Heart left ventricle (tissue), 16 donors: ENCODE measurements at regions of chr13 and their contacts with region 1.

Region 1: DNA sequence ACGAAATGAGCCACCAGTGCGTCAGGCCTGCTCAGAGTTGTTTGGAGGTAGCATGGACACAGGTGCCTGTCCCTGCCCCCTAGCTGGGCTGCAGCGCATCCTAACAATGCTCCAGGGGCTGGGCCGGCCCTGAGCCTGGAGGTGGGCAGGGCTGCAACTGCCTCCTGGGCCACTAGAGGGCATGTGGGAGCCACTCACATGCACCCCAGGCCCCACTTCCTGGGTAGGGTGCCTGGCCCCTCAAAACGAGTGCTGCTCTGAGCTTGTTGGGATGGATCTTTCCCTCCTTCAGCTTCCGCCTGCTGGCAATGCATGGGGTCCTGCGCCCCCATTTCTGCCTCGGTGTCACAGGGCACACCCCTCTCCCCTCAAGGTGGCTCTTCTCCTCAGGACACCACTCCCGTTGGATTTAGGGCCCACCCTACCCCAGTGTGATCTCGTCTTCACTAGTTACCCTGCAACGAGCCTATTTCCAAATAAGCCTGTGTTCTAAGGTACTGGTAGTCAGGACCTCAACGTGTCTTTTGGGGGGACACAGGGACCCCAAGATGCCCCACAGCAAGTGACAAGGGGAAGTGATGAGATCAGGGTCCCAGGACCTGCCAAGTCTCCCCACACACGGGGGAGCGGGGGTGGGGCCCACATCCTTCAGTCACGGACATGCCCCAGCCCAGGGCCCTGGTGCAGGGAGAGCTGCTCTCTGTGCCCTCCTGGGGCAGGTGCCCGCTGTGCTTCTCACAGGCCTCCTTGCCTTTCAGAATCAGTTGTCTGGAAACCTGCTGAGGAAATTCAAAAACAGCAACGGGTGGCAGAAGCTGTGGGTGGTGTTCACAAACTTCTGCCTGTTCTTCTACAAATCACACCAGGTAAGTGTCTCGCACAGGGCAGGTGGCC is 131.3 kb downstream of the STK24 start:
- DNase-seq: peak; percentile 58 to 88 (median 67)
- ATAC-seq: peak; percentile 62 to 88 (median 80)
- H3K4me3 ChIP-seq: no peak overlapping the region
- H3K27ac ChIP-seq: peak overlapping the region in 4 of 12 donors; percentile 5 to 67 (median 16)
- H3K4me1 ChIP-seq: peaks cover 0 to 30% (median 17%) of the 10 kb centered on the region in 12 donors
- H3K27me3 ChIP-seq: no peaks in the 10 kb centered on the region
- CTCF ChIP-seq: peak; percentile 95 to 99 (median 98)
- POLR2A ChIP-seq: no peak

Region 2: DNA sequence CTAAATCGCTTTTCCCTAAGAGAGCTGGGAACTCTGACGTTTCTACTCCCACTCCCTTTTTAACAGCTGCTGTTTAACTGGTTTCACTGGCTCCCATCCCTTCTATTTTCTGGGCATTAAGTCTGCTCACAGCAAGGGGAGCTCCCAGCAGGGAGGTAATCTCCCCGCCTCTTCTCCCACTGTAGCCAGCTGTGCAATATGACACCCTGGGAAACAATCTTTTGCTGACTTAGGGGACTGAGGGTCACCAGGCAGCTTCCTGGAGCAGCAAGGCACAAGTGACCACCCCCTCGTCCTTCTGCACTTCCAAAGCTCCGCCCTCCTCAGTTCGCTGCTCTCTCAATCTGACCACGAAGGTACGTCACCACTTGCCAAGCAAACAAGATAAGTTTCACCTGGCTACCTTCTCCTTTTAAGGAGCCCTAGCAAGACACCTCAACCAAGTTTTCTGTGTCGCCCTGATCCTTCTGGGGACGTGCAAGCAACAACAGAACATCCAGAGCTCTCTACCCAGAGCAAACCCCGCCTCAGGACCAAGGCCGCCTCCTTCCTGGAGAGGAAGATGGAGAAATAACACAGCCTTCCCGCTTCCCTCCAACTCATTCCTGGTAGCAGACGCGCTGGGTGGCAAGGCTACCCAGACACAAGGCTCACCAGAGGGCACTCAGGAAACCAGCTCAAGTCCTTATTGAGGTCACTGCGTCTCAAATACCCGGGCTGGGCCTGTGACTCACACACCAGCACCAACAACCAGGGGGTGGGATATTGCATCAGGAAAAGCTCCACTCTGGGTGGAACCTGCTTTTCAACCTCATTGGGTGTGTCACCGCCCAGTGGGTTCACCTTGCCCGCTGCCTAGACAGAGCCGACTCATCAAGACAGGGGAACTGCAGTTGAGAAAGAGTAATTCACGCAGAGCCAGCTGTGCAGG is 39.0 kb after region 1 on chr13:
- intact Hi-C with region 1: loop called in 1 of 10 experiments (anchors 5 kb)
- DNase-seq: peak in 4 of 5 donors; percentile 61 to 80 (median 69)
- ATAC-seq: peak; percentile 27 to 68 (median 60)
- H3K4me3 ChIP-seq: peak overlapping the region in 3 of 12 donors; percentile 4 to 27 (median 12)
- H3K27ac ChIP-seq: peak overlapping the region in 11 of 12 donors; percentile 42 to 83 (median 73)
- H3K4me1 ChIP-seq: peaks cover 0 to 95% (median 85%) of the 10 kb centered on the region in 12 donors
- H3K27me3 ChIP-seq: no peaks in the 10 kb centered on the region
- CTCF ChIP-seq: no peak
- POLR2A ChIP-seq: no peak

Region 3: DNA sequence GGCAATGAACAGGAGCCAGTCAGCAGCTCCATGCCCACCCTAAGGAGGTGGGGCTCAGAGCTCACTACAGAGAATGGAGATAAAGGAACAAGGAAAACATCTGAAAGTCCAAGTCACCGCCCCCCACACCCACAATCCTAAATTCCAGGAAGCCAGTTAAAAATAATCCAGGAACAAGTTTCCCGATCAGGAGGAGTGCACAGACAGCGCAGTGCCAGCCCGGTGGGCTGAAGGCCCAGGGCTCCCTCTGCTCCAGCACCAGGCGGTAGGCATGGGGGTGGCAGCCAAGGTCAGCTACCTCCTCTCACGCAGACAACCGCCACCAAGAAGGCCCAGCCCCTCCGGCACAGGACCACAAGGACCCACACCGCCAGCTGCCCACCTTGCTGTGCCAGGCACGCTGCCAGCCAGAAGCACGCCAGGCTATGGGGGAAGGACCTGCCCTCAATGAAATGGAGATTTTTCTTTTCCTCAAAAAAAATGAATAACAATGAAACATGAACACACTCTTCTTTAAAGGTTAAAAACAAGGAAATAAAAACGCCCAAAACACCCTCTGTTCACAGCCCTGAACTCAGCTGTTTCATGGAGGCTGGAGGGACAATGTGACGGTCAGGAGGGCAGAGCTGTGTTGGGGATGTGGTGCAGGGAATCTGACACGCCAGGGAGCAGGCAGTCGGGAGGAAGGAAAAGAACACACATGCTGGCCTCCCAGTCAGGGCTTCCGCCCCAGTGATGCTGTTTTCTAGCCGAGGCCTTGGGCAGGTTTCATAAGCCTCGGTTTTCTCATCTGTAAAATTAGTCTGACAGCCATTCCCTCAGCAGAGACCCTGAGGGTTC is 120.4 kb after region 1 on chr13:
- intact Hi-C with region 1: loop called in 1 of 10 experiments (anchors 5 kb)
- DNase-seq: peak; percentile 46 to 78 (median 57)
- ATAC-seq: peak; percentile 77 to 92 (median 90)
- H3K4me3 ChIP-seq: peak overlapping the region in 8 of 12 donors; percentile 10 to 41 (median 26)
- H3K27ac ChIP-seq: peak overlapping the region; percentile 28 to 93 (median 78)
- H3K4me1 ChIP-seq: peaks cover 5 to 95% (median 58%) of the 10 kb centered on the region in 12 donors
- H3K27me3 ChIP-seq: no peaks in the 10 kb centered on the region
- CTCF ChIP-seq: no peak
- POLR2A ChIP-seq: peak in 1 of 2 donors; percentile 14

Region 4: DNA sequence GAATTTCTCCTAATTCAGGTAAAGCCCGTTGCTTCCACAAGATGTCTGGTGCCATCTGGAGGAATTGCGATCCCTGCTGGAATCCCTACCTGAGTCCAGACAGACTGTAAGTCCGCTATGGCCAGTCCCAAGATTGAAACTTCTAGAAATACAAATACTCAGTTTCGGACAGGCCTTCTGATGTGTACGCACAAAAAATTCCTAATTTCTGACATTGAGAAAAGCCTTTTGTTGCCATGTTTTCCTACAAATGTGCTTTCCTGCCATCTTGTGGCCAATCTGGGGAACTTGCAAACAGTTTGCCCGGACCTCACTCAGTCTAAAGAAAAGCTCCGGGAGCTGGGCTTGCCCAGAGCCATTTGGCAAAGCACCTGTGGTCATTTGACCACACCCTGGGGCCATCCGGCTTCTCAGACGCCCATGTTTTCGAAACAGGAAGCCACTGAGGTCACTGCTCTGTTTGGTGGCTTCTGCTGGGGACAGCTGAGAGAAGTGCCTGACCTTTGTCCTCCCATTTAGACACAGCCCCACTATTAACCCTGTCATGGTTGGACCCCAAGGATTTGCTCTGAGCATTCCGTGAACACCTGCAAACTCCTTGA is 227.5 kb after region 1 on chr13:
- intact Hi-C with region 1: loop called (anchors 1 to 5 kb)
- DNase-seq: peak; percentile 66 to 74 (median 70)
- ATAC-seq: peak; percentile 66 to 96 (median 92)
- H3K4me3 ChIP-seq: peak overlapping the region in 1 of 12 donors; percentile 14
- H3K27ac ChIP-seq: peak overlapping the region in 1 of 12 donors; percentile 1
- H3K4me1 ChIP-seq: peaks cover 0 to 15% (median 7%) of the 10 kb centered on the region in 12 donors
- H3K27me3 ChIP-seq: no peaks in the 10 kb centered on the region
- CTCF ChIP-seq: peak; percentile 82 to 96 (median 88)
- POLR2A ChIP-seq: no peak

Region 5: DNA sequence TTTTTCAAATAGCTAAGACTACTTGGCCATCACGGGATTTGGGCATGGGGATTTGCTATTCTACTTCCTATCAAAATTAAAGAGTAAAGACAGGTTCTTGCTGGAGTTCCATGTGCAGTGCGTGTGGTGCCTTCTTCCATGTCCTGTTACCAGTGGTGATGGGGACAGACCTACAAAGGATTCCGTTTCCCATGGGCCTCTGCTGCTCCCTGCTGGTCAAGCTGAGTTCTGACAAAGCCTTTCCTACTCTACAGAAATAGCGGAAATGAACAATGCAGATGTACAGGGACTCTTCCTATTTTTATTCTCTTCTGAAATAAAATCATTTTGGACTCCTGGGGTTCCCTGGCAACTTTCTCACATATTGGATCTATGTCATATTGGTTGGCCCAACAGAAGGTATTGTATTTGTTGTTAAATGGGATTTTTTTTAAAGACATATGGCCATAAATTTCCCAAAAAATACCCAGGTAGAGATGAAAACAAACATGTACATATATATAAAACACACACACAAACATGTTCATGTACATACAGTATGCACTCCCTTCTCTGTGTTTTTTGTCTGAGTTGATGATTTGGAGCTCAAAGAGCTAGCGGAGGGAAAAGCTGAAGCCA is 397.4 kb after region 1 on chr13:
- intact Hi-C with region 1: loop called in 5 of 10 experiments (anchors 5 to 10 kb)
- DNase-seq: peak; percentile 65 to 82 (median 72)
- ATAC-seq: peak; percentile 75 to 87 (median 84)
- H3K4me3 ChIP-seq: no peak overlapping the region
- H3K27ac ChIP-seq: no peak overlapping the region
- H3K4me1 ChIP-seq: peaks cover 0 to 14% (median 0%) of the 10 kb centered on the region in 12 donors
- H3K27me3 ChIP-seq: no peaks in the 10 kb centered on the region
- CTCF ChIP-seq: peak; percentile 79 to 90 (median 83)
- POLR2A ChIP-seq: no peak